ENCODE measurements at regions of chr5 and their contacts with region 1.

Region 1: GRCh38 chr5:8829323-8830029 is 716.4 kb downstream of the SEMA5A start:
- DNase-seq: peak; percentile 96
- H3K4me3 Mint-ChIP-seq: no peak overlapping the region
- H3K27ac Mint-ChIP-seq: peak overlapping the region; percentile 71
- H3K4me1 Mint-ChIP-seq: peaks cover 41% of the 10 kb centered on the region
- H3K27me3 Mint-ChIP-seq: no peaks in the 10 kb centered on the region
- CTCF ChIP-seq: no peak

Region 2: DNA sequence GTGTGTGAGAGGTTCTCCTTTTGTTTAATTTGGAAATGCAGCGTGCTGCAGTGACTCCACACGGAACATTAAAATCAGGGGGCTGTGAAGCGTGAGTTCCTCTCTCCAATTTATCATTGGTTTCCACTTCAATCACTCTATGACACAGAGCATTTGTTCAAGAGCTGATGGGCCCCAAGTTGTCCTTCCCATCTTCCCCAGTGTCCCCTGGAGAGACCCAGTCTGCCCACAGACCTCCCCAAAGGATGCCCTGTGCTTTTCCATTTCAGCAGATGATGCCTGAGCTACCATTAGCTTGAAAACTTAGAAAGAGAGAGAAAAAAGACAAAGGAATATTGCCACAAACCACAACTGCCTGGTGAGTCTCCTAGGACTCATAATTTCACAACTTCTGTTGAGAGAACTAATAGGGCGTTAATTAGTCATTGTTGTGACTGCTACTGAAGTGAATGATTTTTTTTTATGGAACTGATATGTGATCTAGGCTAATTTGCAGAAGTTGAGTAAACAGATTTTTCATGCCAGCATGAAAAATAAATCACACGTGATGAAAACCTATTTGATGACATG is 56.3 kb before region 1 on chr5:
- CTCF ChIA-PET with region 1: no interaction called
- POLR2A ChIA-PET with region 1: no interaction called
- intact Hi-C with region 1: loop called (anchors 5 kb)
- DNase-seq: peak; percentile 30
- H3K4me3 Mint-ChIP-seq: no peak overlapping the region
- H3K27ac Mint-ChIP-seq: no peak overlapping the region
- H3K4me1 Mint-ChIP-seq: peaks cover 6% of the 10 kb centered on the region
- H3K27me3 Mint-ChIP-seq: no peaks in the 10 kb centered on the region
- CTCF ChIP-seq: no peak

Region 3: DNA sequence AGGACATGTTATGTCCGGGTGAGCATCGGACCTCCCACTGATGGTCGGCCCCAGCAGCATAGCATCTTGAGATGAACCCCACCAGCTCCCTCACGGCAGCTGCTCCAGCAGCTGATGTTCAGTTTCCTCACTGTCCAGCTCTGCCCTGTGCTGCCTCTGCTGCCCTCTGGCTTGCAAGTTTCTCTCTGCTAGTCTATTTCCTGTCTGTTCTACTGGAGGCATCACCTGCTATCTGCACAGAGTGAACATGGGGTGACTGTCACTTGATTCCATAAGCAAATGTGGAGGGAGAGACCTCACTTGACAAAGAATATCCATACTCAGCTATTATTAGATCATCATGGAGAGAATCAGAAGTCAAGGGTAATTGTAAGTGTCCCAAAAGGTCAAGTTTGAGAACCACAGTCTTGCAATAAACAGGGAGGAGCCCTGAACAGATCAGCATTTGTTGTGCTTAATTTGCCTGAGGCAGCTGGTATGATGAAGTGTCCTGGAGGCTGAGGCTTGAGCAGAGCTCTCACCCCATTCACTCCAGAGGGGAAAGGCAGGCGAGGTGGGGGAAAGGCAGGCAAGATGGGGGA is 13.6 kb after region 1 on chr5:
- CTCF ChIA-PET with region 1: interaction called, 20 read pairs
- POLR2A ChIA-PET with region 1: no interaction called
- intact Hi-C with region 1: no loop called
- DNase-seq: peak; percentile 47
- H3K4me3 Mint-ChIP-seq: no peak overlapping the region
- H3K27ac Mint-ChIP-seq: no peak overlapping the region
- H3K4me1 Mint-ChIP-seq: peaks cover 13% of the 10 kb centered on the region
- H3K27me3 Mint-ChIP-seq: no peaks in the 10 kb centered on the region
- CTCF ChIP-seq: peak; percentile 27

Region 4: DNA sequence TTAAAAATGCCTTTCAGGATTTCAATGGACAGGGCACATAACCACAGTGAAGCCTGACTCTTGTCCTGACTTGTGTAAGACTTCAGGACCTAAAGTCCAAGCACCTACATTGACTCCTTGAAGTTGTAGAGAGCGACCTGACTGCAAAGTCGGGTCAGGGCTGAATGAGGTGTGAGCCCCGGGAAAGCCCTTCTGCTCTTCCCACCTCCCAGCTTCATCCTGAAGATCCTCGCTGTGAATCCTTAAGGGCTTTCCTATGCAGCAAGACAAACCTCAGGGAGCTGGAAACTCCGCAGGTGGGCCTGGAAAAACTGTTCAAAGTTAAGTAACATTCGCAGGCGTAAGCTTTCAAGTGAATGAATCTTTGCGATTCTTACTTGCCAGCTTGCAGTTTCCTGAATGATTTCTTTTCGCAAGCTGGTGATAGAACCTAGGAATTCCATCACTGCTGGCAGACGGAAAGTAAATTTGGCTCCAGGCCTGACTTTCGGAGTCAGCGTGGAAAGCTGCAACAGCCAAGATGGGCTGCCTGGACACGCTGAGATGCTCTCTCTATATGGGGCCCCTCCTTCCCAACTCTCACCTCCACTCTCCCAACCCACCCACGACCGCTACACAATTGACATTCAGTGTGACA is 705.5 kb after region 1 on chr5:
- CTCF ChIA-PET with region 1: no interaction called
- POLR2A ChIA-PET with region 1: no interaction called
- intact Hi-C with region 1: no loop called
- DNase-seq: no peak
- H3K4me3 Mint-ChIP-seq: no peak overlapping the region
- H3K27ac Mint-ChIP-seq: no peak overlapping the region
- H3K4me1 Mint-ChIP-seq: no peaks in the 10 kb centered on the region
- H3K27me3 Mint-ChIP-seq: no peaks in the 10 kb centered on the region
- CTCF ChIP-seq: no peak

Measured in MCF 10A (cell line).